Transverse colon (tissue), 4 donors: ENCODE measurements at regions of chr18 and their contacts with region 1.

Region 1: GRCh38 chr18:49944663-49945062 is 131.3 kb upstream of the ACAA2 start:
- DNase-seq: no peak
- H3K4me3 ChIP-seq: no peak overlapping the region
- H3K27ac ChIP-seq: no peak overlapping the region
- H3K4me1 ChIP-seq: no peaks in the 10 kb centered on the region
- H3K27me3 ChIP-seq: no peaks in the 10 kb centered on the region
- CTCF ChIP-seq: peak in 2 of 5 experiments; percentile 14 to 19
- EP300 ChIP-seq: no peak
- POLR2A ChIP-seq: no peak

Region 2: GRCh38 chr18:49886891-49887764 is 57.5 kb before region 1 on chr18:
- in situ Hi-C with region 1: loop called in 1 of 4 experiments (anchors 10 kb)
- intact Hi-C with region 1: no loop called
- DNase-seq: no peak
- H3K4me3 ChIP-seq: no peak overlapping the region
- H3K27ac ChIP-seq: no peak overlapping the region
- H3K4me1 ChIP-seq: no peaks in the 10 kb centered on the region
- H3K27me3 ChIP-seq: no peaks in the 10 kb centered on the region
- CTCF ChIP-seq: no peak
- EP300 ChIP-seq: no peak
- POLR2A ChIP-seq: no peak

Region 3: GRCh38 chr18:50194631-50195532 is 250.2 kb after region 1 on chr18 and contains the start of gene MYO5B:
- in situ Hi-C with region 1: no loop called
- intact Hi-C with region 1: loop called (anchors 5 kb)
- DNase-seq: peak; percentile 91
- H3K4me3 ChIP-seq: peak within 1 kb of the TSS; percentile 57 to 89 (median 72)
- H3K27ac ChIP-seq: peak within 1 kb of the TSS; percentile 72 to 95 (median 92)
- H3K4me1 ChIP-seq: peaks cover 0 to 30% (median 9%) of the 10 kb centered on the region in 4 donors
- H3K27me3 ChIP-seq: peaks cover 52% of the 10 kb centered on the region
- CTCF ChIP-seq: peak; percentile 13 to 39 (median 36)
- EP300 ChIP-seq: no peak
- POLR2A ChIP-seq: peak; percentile 84
- total RNA-seq, gene MYO5B: 96.7 to 144 (median 114) TPM